Posterior cingulate gyrus (tissue), 11 donors: ENCODE measurements at regions of chr2 and their contacts with region 1.

Region 1: GRCh38 chr2:177263451-177264208 is 897 bp downstream of the NFE2L2 start:
- DNase-seq: peak; percentile 92 to 99 (median 96)

Region 2: DNA sequence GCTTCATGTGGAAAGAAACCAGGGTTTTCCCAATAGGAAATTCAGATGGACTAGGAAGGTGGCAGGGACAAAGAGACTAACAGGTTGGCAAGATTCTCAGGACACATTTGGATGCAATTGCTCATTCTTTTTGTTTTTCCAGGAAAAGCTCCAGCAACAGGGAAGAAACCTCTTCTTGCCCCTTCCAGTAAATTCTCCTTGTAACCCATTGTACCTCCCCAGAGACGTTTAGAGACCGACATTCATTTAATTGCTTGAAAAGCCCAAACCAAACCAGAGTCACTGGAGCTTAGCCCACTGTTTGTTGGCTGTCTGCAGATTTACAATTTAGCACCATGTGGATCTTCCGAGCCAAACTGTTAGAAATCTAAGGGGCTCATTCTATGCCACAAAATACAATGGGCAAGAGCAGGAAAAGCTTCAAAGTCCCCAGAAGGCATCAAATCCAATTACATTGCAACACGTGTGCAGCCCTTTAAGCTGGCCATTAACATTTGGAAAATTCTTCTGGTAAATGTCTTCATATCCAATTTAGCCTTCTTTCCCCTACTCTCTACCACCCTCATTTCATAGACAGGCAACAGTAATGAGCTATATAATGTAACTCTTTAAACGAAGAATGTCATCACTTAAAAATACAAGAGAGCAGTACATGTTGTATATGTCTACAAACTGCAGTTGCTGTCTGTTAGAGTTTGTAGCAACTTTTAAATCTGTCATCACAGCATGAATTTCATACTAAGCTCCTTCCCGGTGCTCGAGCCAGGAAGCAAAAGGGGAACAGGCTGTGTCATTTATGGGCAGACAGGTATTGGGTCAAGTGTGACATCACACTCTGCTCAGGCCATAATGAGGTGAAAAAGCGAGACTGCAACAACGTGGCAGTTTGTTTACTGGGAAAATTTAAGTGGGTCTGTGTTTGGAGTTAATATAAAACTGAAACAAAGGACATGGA is 286.6 kb before region 1 on chr2:
- intact Hi-C with region 1: no loop called
- DNase-seq: no peak

Region 3: DNA sequence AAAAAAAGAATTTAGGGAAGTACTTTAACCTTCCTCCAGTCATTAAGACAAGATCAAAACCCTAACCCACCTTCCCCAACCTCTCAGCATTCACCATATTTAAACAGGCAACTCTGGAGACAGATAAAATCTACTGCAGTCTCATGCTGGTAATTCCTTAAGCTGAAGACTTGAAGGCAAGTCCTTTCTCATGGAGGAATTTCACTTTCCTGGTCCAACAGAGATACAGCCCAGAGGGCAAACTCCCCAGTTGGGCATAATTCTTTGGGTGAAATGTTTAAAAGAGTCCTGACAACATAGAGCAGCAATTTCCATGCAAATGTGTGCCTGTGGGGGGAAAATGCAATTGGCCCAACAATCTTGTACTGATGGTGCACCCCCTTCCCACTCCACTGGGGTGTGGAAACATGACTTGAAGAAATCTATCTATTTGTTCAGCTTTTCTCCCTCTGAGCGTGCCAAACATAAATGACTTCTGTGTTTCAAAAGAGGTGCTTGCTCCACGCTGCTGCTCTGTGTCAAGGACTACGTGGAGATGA is 182.8 kb before region 1 on chr2:
- intact Hi-C with region 1: no loop called
- DNase-seq: no peak

Region 4: GRCh38 chr2:177164584-177165052 is 99.0 kb before region 1 on chr2:
- intact Hi-C with region 1: loop called (anchors 2 kb)
- DNase-seq: peak; percentile 80 to 98 (median 88)

Region 5: DNA sequence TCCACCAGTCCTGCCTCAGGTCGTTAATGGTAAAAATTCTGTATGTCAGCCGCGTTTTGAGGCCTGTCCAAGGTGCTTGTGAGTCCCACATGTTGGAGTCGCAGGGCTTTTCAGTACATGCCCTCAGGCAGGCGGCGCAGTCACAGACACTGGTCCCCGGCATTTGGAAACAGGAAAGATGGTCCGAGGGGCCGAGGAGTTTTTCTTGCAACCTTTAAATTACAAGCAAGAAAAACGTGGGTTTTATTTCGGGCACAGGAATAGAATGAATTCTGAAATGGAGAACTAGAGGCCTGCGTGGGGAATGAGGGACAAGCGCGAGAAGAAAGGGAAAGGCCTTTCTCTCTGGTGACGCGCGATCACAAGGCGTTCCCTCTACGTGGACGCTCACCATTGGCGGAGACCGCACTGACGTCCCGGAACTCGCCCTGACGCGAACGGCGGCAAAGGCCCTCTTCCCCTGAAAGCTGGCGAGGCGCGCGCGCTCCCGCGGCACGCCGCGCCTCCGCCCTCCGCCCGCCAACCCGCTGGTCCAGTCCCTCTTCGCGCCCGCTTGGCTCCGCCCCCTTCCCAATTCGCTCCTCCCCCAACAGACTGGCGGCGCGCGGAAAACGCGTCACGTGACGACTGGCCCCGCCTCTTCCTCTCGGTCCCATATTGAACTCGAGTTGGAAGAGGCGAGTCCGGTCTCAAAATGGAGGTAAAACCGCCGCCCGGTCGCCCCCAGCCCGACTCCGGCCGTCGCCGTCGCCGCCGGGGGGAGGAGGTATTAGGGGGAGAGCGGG is 51.3 kb before region 1 on chr2 and contains the start of gene HNRNPA3:
- intact Hi-C with region 1: loop called (anchors 1 kb)
- DNase-seq: peak; percentile 99 to 100 (median 99)

Region 6: DNA sequence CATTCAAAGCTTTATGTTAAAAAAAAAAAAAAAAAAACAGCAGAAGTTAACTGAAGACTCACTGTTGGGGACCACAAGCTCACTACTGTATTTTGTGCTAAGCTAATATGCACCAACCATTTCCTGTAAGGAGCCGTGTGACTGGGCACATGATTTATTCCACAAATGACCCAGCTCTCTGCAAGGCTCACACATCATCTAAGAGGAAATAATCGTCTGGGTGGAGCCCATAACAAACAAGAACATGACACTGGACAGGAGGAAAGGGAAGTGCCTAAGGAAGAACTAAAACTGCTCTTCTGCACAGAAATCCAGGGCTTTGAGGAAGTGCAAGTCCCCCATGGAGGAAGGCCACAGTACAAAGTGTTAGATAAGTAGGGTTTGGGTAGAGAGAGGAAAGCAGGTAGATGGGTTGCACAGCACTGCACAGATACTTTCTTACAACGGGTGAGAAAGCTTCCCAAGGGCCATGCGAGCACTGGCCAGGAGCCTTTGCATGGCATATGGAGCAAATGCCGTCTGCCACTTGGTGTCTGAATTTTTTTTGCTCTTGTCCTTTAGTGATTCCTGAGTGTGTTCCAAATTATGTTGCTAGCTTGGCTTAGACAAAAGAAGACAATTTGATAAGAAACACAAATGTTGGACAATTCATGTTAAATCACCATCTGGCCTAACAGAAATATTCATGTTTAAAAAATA is 23.5 kb before region 1 on chr2:
- intact Hi-C with region 1: loop called (anchors 2 kb)
- DNase-seq: peak in 4 of 10 donors; percentile 36 to 87 (median 58)

Region 7: GRCh38 chr2:177296040-177296439 is 32.4 kb after region 1 on chr2:
- intact Hi-C with region 1: loop called (anchors 1 kb)
- DNase-seq: no peak

Region 8: GRCh38 chr2:177419274-177419673 is 155.6 kb after region 1 on chr2:
- intact Hi-C with region 1: loop called (anchors 10 kb)
- DNase-seq: no peak